Caco-2 (cell line): ENCODE measurements at regions of chr3 and their contacts with region 1.

Region 1: GRCh38 chr3:32934150-32934742 is 17.2 kb upstream of the CCR4 start:
- DNase-seq: peak in 1 of 2 experiments; percentile 42
- H3K4me3 ChIP-seq: no peak overlapping the region
- H3K4me3 Mint-ChIP-seq: no peak overlapping the region
- H3K27ac Mint-ChIP-seq: no peak overlapping the region
- H3K4me1 ChIP-seq: no peaks in the 10 kb centered on the region
- H3K4me1 Mint-ChIP-seq: peaks cover 8% of the 10 kb centered on the region
- H3K27me3 ChIP-seq: no peaks in the 10 kb centered on the region
- H3K27me3 Mint-ChIP-seq: no peaks in the 10 kb centered on the region
- CTCF ChIP-seq: peak; percentile 71 to 80

Region 2: DNA sequence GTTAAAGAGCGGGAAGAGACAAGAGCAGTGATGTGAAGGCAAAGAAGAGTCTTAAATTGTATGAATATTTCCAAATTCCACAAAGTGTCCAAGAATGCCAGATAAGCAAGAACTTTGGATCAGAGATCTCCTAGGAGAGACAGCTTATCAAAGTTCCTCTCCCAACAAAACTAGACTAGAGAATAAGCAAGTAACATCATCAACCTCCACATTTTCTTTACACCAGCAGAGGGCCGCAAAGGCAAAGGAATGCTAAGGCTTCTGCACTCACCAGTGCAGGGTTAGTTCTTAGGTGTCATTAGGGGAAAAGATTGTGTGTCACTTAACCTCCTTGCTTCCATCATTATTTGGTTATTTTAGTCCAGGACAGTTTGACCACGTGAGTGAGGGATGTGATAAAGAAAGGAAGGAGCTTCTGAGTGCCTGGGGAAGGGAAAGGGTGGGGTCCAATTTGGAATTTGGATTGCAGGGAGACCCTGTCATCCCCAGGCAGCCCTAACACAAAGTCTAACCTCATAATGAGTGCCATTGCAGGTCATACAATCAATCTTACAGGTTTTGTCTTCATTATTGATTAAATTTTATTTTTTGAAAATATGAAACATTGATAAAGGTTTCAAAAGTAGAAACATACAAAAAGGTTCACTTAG is 424.0 kb before region 1 on chr3:
- CTCF ChIA-PET with region 1: no interaction called
- POLR2A ChIA-PET with region 1: no interaction called
- intact Hi-C with region 1: loop called (anchors 1 kb)
- DNase-seq: peak; percentile 71 to 77
- H3K4me3 ChIP-seq: no peak overlapping the region
- H3K4me3 Mint-ChIP-seq: no peak overlapping the region
- H3K27ac Mint-ChIP-seq: no peak overlapping the region
- H3K4me1 ChIP-seq: no peaks in the 10 kb centered on the region
- H3K4me1 Mint-ChIP-seq: no peaks in the 10 kb centered on the region
- H3K27me3 ChIP-seq: no peaks in the 10 kb centered on the region
- H3K27me3 Mint-ChIP-seq: no peaks in the 10 kb centered on the region
- CTCF ChIP-seq: peak; percentile 63 to 77

Region 3: DNA sequence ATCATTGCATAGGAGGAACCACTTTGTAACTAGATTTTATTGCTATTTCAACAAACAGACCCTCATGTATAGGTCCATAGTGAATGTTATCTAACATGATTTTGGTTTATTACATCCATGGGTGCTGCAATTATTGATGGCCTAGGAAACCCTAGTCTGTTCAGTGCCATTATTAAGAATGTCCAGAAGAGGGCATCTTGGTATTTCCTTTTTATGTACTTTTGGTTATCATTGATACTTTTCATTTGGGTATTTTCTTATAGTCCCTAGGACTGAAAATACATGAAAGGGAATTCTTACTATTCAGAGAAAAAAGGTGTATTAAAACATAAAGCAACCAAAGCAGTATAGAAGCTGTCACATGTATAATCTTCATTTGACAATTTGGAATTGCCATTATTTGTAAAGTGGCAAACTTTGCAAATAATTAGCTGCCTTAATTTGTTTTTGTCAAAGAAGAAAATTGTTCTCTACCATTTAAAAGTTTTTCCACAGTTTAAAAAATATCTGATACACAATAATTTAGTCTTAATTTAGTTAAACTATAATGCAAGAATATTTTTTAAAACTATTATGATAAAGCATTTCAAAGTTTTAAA is 200.5 kb before region 1 on chr3:
- CTCF ChIA-PET with region 1: no interaction called
- POLR2A ChIA-PET with region 1: no interaction called
- intact Hi-C with region 1: loop called (anchors 1 kb)
- DNase-seq: peak in 1 of 2 experiments; percentile 39
- H3K4me3 ChIP-seq: no peak overlapping the region
- H3K4me3 Mint-ChIP-seq: no peak overlapping the region
- H3K27ac Mint-ChIP-seq: no peak overlapping the region
- H3K4me1 ChIP-seq: no peaks in the 10 kb centered on the region
- H3K4me1 Mint-ChIP-seq: no peaks in the 10 kb centered on the region
- H3K27me3 ChIP-seq: no peaks in the 10 kb centered on the region
- H3K27me3 Mint-ChIP-seq: no peaks in the 10 kb centered on the region
- CTCF ChIP-seq: peak; percentile 47 to 52

Region 4: GRCh38 chr3:32816439-32817256 is 117.6 kb before region 1 on chr3:
- CTCF ChIA-PET with region 1: no interaction called
- POLR2A ChIA-PET with region 1: no interaction called
- intact Hi-C with region 1: loop called (anchors 5 kb)
- DNase-seq: peak; percentile 76 to 91
- H3K4me3 ChIP-seq: peak overlapping the region; percentile 78
- H3K4me3 Mint-ChIP-seq: peak overlapping the region; percentile 86
- H3K27ac Mint-ChIP-seq: peak overlapping the region; percentile 93
- H3K4me1 ChIP-seq: peaks cover 31% of the 10 kb centered on the region
- H3K4me1 Mint-ChIP-seq: peaks cover 15% of the 10 kb centered on the region
- H3K27me3 ChIP-seq: no peaks in the 10 kb centered on the region
- H3K27me3 Mint-ChIP-seq: no peaks in the 10 kb centered on the region
- CTCF ChIP-seq: no peak

Region 5: GRCh38 chr3:32842531-32842931 is 91.7 kb before region 1 on chr3:
- CTCF ChIA-PET with region 1: no interaction called
- POLR2A ChIA-PET with region 1: no interaction called
- intact Hi-C with region 1: loop called (anchors 10 kb)
- DNase-seq: no peak
- H3K4me3 ChIP-seq: no peak overlapping the region
- H3K4me3 Mint-ChIP-seq: peak overlapping the region; percentile 24
- H3K27ac Mint-ChIP-seq: peak overlapping the region; percentile 50
- H3K4me1 ChIP-seq: peaks cover 81% of the 10 kb centered on the region
- H3K4me1 Mint-ChIP-seq: peaks cover 43% of the 10 kb centered on the region
- H3K27me3 ChIP-seq: no peaks in the 10 kb centered on the region
- H3K27me3 Mint-ChIP-seq: no peaks in the 10 kb centered on the region
- CTCF ChIP-seq: no peak

Region 6: DNA sequence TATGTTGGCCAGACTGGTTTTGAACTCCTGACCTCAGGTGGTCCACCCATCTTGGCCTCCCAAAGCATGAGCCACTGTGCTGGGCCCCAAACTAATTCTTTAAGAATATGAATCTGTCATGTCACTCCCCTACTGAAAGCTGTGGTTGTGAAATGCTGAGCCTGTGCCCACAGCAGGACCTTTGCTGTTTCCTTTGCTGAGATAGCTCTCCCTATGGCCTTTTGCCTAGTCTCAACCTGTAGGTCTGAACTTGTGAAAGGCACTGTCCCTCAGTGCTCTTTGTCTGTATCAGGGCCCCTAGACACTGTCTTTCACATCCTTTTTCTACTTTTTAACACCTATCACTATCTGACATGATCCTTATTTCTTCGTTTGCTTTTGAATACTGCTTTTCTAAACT is 45.5 kb before region 1 on chr3:
- CTCF ChIA-PET with region 1: no interaction called
- POLR2A ChIA-PET with region 1: no interaction called
- intact Hi-C with region 1: no loop called
- DNase-seq: no peak
- H3K4me3 ChIP-seq: no peak overlapping the region
- H3K4me3 Mint-ChIP-seq: no peak overlapping the region
- H3K27ac Mint-ChIP-seq: no peak overlapping the region
- H3K4me1 ChIP-seq: no peaks in the 10 kb centered on the region; the same call in 1 of the 2 replicates
- H3K4me1 Mint-ChIP-seq: peaks cover 18% of the 10 kb centered on the region
- H3K27me3 ChIP-seq: no peaks in the 10 kb centered on the region
- H3K27me3 Mint-ChIP-seq: no peaks in the 10 kb centered on the region
- CTCF ChIP-seq: no peak

Region 7: DNA sequence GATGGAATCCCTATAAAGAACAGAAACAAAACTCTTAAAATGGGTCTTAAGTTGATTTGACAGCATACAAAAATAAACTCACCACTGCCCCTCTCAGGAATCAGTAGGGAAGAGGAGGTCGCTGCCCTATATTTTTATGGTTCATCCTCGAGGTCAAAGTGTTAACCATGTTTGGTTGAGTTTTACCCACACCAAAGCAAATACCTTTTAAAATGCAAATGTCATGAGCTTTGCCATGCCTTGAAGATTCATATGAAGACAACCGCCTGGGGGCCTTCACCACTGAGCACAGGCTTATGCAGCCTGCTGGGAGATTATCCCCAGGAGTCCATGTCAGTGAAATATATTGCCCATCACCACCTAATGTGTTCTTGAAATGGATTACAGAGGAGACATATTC is 96.6 kb after region 1 on chr3:
- CTCF ChIA-PET with region 1: no interaction called
- POLR2A ChIA-PET with region 1: no interaction called
- intact Hi-C with region 1: no loop called
- DNase-seq: no peak
- H3K4me3 ChIP-seq: no peak overlapping the region
- H3K4me3 Mint-ChIP-seq: no peak overlapping the region
- H3K27ac Mint-ChIP-seq: no peak overlapping the region
- H3K4me1 ChIP-seq: peaks cover 4% of the 10 kb centered on the region; the same call in 1 of the 2 replicates
- H3K4me1 Mint-ChIP-seq: peaks cover 9% of the 10 kb centered on the region
- H3K27me3 ChIP-seq: no peaks in the 10 kb centered on the region
- H3K27me3 Mint-ChIP-seq: no peaks in the 10 kb centered on the region
- CTCF ChIP-seq: peak; percentile 13 to 14

Region 8: DNA sequence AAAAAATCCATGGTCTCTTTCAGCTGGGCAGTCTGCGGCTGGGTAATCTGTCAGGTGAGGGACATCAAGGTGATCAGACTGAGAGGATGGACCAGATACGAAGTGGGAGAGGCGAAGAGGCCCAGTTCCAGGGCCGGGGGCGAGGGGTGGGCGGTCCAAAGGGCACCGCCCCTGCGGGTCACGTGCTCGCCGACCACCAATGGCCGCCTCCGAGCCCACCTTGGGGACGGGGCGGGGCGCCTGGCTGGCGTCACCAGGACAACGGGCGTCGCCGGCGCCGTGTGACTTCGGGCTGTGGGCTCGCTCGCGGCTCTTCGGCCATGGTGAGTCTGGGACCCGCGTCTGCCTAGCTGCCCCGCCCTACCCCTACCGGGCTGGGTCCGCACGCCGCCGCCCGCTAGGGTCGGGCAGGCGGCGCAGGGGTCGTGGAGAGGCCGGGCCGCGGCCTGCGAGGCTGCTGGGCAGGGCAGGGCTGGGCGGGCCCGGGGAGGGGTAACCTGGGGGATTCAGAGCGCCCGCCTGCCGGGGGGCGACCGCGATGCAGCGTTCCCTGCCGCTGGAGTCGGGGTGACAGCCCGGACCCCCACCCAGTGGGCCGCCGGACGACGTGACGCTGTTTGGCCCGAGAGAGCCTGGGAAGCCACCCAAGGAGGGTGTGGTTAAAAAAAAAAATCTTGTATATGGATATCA is 343.1 kb after region 1 on chr3 and contains the start of gene FBXL2:
- CTCF ChIA-PET with region 1: no interaction called
- POLR2A ChIA-PET with region 1: no interaction called
- intact Hi-C with region 1: no loop called
- DNase-seq: peak; percentile 91 to 96
- H3K4me3 ChIP-seq: peak within 1 kb of the TSS; percentile 86
- H3K4me3 Mint-ChIP-seq: peak within 1 kb of the TSS; percentile 71
- H3K27ac Mint-ChIP-seq: peak within 1 kb of the TSS; percentile 9
- H3K4me1 ChIP-seq: no peaks in the 10 kb centered on the region
- H3K4me1 Mint-ChIP-seq: no peaks in the 10 kb centered on the region
- H3K27me3 ChIP-seq: no peaks in the 10 kb centered on the region
- H3K27me3 Mint-ChIP-seq: no peaks in the 10 kb centered on the region
- CTCF ChIP-seq: no peak
- total RNA-seq, gene FBXL2: 8.5 and 10.8 TPM in 2 replicates